Gastrocnemius medialis (tissue), 4 donors: ENCODE measurements at regions of chr14 and their contacts with region 1.

Region 1: DNA sequence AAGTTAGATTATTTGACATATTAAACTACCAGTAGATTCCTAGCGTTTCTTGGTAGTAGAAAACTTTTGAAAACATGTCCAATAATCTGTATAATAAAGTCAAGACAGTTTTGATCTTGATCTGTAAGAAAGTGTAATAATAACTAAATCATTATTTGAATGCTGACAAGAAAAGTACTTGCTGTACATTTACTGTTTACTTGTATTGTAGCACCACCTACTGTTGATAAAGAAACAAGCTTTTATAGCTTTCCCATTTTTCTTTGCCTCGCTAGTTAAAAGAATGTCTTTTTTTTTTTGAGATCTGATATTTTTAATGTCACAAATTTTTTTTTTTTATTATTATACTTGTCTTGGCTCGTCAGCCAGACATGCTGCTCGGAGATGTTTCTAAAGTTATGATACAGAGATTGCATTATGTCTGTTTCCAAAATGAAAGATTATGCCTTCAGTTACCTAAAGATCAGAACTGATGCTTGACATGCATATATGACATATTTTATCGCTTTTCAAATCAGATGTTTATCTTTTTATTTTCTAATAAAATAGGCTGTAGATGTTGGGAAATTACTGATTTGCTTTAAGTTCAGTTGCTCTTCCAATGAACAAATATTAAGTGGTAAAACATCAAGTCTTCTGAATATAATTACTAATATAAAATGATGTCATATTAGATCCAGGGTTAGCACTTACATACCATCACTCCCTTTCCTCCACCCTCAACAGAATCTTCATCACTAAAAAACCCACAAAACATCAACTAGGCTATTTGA is 140.5 kb downstream of the AKAP6 start:
- DNase-seq: no peak
- ATAC-seq: no peak
- H3K4me3 ChIP-seq: no peak overlapping the region
- H3K27ac ChIP-seq: peak overlapping the region in 2 of 4 donors; percentile 75 to 77
- H3K4me1 ChIP-seq: peaks cover 37 to 50% of the 10 kb centered on the region in 2 donors
- H3K27me3 ChIP-seq: no peaks in the 10 kb centered on the region
- CTCF ChIP-seq: peak; percentile 23 to 56 (median 49)
- POLR2A ChIP-seq: no peak

Region 2: GRCh38 chr14:31510222-31510621 is 959.4 kb before region 1 on chr14:
- in situ Hi-C with region 1: loop called in 2 of 4 experiments (anchors 10 to 25 kb)
- intact Hi-C with region 1: no loop called
- DNase-seq: no peak
- ATAC-seq: no peak
- H3K4me3 ChIP-seq: no peak overlapping the region
- H3K27ac ChIP-seq: no peak overlapping the region
- H3K4me1 ChIP-seq: peaks cover 0 to 8% of the 10 kb centered on the region in 2 donors
- H3K27me3 ChIP-seq: no peaks in the 10 kb centered on the region
- CTCF ChIP-seq: peak; percentile 35 to 68 (median 56)
- POLR2A ChIP-seq: no peak

Region 3: DNA sequence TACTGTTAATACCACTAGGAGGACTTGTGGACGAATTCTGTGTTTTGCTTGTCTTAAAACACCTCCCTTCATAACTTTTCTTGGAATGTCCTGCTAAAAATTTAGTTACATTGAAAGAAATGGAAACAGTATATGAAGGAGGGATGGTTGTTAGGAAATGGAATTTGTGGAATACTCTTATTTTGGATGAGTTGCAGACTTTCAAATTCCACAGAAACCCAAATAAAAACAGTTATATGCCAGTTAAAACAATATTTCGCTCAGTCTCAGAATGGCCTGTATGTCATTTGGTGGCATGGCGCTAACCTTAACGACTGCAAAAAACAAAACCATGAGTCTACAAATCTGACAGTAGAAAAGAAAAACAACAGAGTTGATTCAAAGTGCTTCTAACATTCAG is 404.6 kb before region 1 on chr14:
- in situ Hi-C with region 1: loop called (anchors 5 to 25 kb)
- intact Hi-C with region 1: no loop called
- DNase-seq: no peak
- ATAC-seq: no peak
- H3K4me3 ChIP-seq: no peak overlapping the region
- H3K27ac ChIP-seq: no peak overlapping the region
- H3K4me1 ChIP-seq: no peaks in the 10 kb centered on the region
- H3K27me3 ChIP-seq: no peaks in the 10 kb centered on the region
- CTCF ChIP-seq: no peak
- POLR2A ChIP-seq: no peak

Region 4: DNA sequence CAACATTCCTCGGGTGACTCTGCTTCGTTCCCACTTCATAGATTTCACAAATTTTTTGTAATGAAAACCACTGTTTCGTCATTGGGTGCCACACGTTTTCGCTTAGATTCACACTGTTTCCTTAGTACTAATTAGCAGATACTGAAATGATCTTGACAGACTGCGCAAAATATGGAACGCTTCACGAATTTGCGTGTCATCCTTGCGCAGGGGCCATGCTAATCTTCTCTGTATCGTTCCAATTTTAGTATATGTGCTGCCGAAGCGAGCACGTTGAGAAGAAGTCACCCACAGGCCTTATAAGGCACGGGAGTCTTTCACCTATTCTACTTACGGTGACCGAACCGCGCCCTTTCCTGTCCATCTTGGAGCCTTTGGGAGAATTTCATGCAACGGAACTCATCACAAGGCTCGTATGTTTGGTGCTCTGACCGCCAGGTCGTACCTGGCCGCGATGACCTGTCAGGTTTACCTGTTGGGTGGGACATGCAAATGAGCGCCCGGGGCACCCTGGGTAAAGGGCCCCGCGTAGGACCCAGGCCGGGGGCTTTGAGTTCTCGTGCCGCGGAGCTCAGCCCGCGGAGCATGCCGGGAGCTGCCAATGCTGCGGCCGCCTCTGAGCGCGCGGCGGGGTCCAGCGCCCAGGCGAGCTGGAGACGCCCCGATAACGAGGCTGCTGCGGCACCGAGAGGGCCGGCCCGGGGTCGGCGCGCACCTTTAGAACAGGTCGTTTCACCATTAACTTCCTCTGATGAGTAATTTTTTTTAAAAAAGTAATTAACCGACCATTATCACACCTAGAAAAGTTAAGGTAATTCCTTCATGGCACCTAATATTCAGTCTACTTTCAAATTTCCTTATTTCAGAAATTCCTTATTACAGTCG is 266.3 kb before region 1 on chr14 and contains the start of gene RNU6-8:
- in situ Hi-C with region 1: no loop called
- intact Hi-C with region 1: loop called (anchors 5 kb)
- DNase-seq: peak; percentile 82 to 91
- ATAC-seq: peak; percentile 72 to 76
- H3K4me3 ChIP-seq: peak within 1 kb of the TSS; percentile 81 to 95 (median 84)
- H3K27ac ChIP-seq: peak within 1 kb of the TSS; percentile 87 to 96 (median 92)
- H3K4me1 ChIP-seq: peaks cover 11 to 17% of the 10 kb centered on the region in 2 donors
- H3K27me3 ChIP-seq: no peaks in the 10 kb centered on the region
- CTCF ChIP-seq: no peak
- POLR2A ChIP-seq: peak; percentile 84 to 88
- total RNA-seq, gene RNU6-8: not detected

Region 5: GRCh38 chr14:32319362-32320049 is 150.1 kb before region 1 on chr14:
- in situ Hi-C with region 1: no loop called
- intact Hi-C with region 1: loop called (anchors 5 kb)
- DNase-seq: no peak
- ATAC-seq: no peak
- H3K4me3 ChIP-seq: no peak overlapping the region
- H3K27ac ChIP-seq: peak overlapping the region in 1 of 4 donors; percentile 33
- H3K4me1 ChIP-seq: peaks cover 9 to 11% of the 10 kb centered on the region in 2 donors
- H3K27me3 ChIP-seq: no peaks in the 10 kb centered on the region
- CTCF ChIP-seq: no peak
- POLR2A ChIP-seq: no peak

Region 6: DNA sequence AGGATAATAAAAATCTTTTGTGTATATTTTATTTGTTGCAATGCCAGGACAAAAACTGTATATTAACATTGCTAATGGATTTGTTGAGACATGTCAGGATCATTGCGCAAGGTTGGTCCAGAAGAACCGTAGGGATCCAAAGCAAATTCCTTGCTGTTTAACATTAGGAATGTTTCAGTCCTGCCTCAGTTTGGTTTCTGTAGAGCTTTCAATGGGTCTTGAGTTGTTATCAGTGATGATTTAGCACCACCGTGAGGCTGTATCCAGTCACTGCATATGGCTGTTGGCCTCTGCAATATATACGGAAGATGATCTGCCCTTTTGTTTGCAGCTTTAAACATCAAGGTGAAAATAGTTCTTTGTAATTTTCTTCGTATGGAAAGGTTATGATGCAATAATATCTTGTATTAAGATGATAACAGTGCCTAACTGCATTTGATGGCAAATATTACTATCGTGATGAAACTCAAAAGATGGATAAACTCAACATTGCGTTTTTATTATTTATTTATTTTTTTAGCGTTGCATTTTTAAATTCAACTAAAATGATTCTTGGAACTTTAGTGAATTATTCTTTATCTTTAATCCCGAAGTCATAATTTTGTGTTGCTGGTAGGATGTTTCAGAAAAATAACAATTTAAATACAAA is 90.8 kb after region 1 on chr14:
- in situ Hi-C with region 1: no loop called
- intact Hi-C with region 1: loop called (anchors 1 kb)
- DNase-seq: peak; percentile 45 to 51
- ATAC-seq: peak; percentile 80 to 94
- H3K4me3 ChIP-seq: no peak overlapping the region
- H3K27ac ChIP-seq: peak overlapping the region in 2 of 4 donors; percentile 8 to 14
- H3K4me1 ChIP-seq: peaks cover 34 to 48% of the 10 kb centered on the region in 2 donors
- H3K27me3 ChIP-seq: no peaks in the 10 kb centered on the region
- CTCF ChIP-seq: peak; percentile 62 to 92 (median 87)
- POLR2A ChIP-seq: no peak